K562 (cell line): ENCODE measurements at regions of chr7 and their contacts with region 1.

Region 1: DNA sequence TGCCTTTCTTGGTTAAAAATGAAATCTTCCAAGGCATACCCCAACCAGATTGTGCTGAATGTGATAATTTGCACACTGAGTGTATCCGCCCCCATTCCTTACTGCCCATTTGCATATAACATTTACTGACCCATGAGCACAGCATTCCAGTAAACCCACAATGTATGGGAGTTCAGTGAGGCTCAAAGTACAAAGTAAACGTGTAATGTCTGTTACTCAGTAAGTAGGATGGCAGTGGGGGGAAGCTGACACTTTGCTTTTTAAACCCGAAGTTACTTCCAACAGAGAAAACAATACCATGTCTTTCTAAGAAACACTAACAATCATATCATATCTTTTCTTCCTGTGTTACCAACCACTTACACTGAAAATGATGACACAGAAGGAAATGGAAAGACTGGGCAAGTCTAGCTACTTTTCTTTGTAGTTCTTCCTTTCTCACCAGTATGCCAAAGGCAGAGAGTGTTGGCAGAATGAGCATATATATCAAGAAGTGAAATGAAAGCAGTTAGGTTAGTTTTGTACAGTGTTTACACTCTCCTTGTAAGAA is 27.1 kb upstream of the SOSTDC1 start:
- DNase-seq: peak in 2 of 4 experiments; percentile 70 to 72
- ATAC-seq: peak; percentile 93
- H3K4me3 ChIP-seq: no peak overlapping the region
- H3K27ac ChIP-seq: peak overlapping the region; percentile 71
- H3K4me1 ChIP-seq: peaks cover 0 to 18% of the 10 kb centered on the region in 2 experiments; a peak in 3 of 5 replicates
- H3K27me3 ChIP-seq: no peaks in the 10 kb centered on the region
- CTCF ChIP-seq: no peak
- EP300 ChIP-seq: peak; percentile 92
- POLR2A ChIP-seq: no peak
- RAD21 ChIP-seq: peak in 1 of 2 experiments; percentile 39; a peak in 1 of 4 replicates

Region 2: GRCh38 chr7:16260236-16260728 is 232.3 kb before region 1 on chr7:
- CTCF ChIA-PET with region 1: no interaction called
- POLR2A ChIA-PET with region 1: no interaction called
- in situ Hi-C with region 1: no loop called
- intact Hi-C with region 1: loop called (anchors 1 kb)
- DNase-seq: peak; percentile 25 to 75 (median 32)
- ATAC-seq: peak; percentile 60
- H3K4me3 ChIP-seq: no peak overlapping the region
- H3K27ac ChIP-seq: peak overlapping the region; percentile 93
- H3K4me1 ChIP-seq: peaks cover 0 to 22% of the 10 kb centered on the region in 2 experiments; a peak in 3 of 5 replicates
- H3K27me3 ChIP-seq: no peaks in the 10 kb centered on the region
- CTCF ChIP-seq: no peak
- EP300 ChIP-seq: peak; percentile 57
- POLR2A ChIP-seq: no peak
- RAD21 ChIP-seq: no peak

Region 3: GRCh38 chr7:16268821-16269768 is 223.5 kb before region 1 on chr7:
- CTCF ChIA-PET with region 1: no interaction called
- POLR2A ChIA-PET with region 1: no interaction called
- in situ Hi-C with region 1: no loop called
- intact Hi-C with region 1: loop called (anchors 1 kb)
- DNase-seq: peak; percentile 88 to 98 (median 90)
- ATAC-seq: peak; percentile 66
- H3K4me3 ChIP-seq: no peak overlapping the region; the same call in 1 of the 2 replicates
- H3K27ac ChIP-seq: peak overlapping the region; percentile 94
- H3K4me1 ChIP-seq: peaks cover 10 to 30% of the 10 kb centered on the region in 2 experiments; a peak in 4 of 5 replicates
- H3K27me3 ChIP-seq: no peaks in the 10 kb centered on the region
- CTCF ChIP-seq: no peak
- EP300 ChIP-seq: peak; percentile 100
- POLR2A ChIP-seq: peak; percentile 76; the same call in 1 of the 2 replicates
- RAD21 ChIP-seq: peak in 1 of 2 experiments; percentile 42

Region 4: DNA sequence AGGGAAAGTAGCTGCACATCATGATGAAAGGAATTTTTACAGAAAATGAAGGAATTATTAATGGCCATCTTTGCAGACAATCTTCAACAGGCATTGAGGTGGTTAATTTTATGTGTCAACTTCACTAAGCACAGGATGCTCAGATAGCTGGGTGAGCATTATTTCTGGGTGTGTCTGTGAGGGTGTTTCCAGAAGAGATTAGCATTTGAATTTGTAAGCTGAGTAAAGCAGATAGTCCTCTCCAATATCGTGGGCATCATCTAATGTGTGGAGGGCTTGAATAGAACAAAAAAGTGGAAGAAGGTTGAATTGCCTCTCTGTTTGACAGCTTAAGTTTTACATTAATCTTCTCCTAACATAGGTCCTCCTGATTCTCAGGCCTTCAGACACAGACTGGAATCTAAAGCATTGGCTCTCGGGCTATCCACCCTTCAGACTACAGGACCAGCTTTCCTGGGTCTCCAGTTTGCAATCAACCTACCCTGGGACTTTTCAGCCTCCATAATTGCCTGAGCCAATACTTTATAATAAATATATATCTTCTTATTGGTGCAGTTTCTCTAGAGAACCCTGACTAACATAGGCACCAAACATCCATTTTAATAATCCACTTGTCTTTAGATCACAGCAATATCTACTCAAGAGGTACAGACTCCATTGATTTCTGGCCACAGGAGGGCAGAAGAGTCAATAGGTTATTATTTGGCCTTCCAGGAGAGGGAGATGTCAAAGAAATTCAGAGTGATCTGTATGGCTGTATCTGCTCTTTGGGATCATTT is 60.8 kb before region 1 on chr7:
- CTCF ChIA-PET with region 1: no interaction called
- POLR2A ChIA-PET with region 1: no interaction called
- in situ Hi-C with region 1: no loop called
- intact Hi-C with region 1: loop called (anchors 2 kb)
- DNase-seq: peak; percentile 36 to 77 (median 50)
- ATAC-seq: peak; percentile 92
- H3K4me3 ChIP-seq: no peak overlapping the region
- H3K27ac ChIP-seq: no peak overlapping the region
- H3K4me1 ChIP-seq: peaks cover 0 to 37% of the 10 kb centered on the region in 2 experiments; a peak in 4 of 5 replicates
- H3K27me3 ChIP-seq: no peaks in the 10 kb centered on the region
- CTCF ChIP-seq: peak; percentile 71 to 96 (median 89)
- EP300 ChIP-seq: no peak; the same call in 1 of the 2 replicates
- POLR2A ChIP-seq: no peak
- RAD21 ChIP-seq: peak; percentile 84 to 92

Region 5: DNA sequence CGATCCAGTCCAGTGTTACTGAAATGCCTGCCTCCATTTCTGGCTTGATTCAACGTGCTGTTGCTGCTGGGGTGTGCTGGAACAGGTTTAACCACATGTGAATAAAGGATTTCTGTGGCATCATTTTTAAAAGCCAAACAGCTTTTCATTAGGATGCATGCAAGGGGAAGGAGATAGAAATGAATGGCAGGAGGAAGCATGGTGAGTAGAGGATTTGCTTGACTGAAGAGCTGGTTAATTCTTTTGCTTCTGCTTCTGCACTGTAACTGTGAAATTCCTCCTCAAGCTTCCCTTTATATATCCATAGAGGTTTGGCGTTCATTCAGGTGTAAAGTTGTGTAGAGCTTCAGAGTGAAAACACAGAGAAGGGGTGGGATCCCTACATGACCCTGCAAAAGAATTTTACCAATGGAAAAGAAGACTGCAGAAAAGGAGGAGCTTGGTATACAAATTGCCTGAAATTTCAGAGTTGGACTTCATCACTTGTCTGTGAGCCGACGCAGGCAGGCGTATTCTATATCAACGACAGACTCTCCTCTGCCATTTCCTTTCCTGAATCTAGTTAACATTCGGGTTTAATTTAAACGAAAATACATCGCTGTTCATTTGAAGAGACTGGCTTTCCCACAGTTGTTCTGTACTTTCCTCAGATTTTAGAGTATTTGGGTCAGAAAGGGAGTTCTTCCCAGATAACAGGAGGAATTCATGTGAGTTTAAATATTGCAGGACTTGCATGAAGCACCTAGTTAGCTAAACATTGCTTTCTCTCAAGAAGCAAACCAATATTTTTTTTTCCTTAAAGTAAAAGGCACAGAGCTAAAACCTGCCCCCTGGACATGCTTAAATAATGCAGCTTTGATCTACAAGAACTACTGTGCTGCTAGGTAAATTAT is 26.9 kb before region 1 on chr7 and contains the start of gene SOSTDC1:
- CTCF ChIA-PET with region 1: no interaction called
- POLR2A ChIA-PET with region 1: interaction called, 6 read pairs
- in situ Hi-C with region 1: no loop called
- intact Hi-C with region 1: loop called (anchors 1 kb)
- DNase-seq: peak; percentile 16 to 78 (median 43)
- ATAC-seq: peak; percentile 91
- H3K4me3 ChIP-seq: peak within 1 kb of the TSS; percentile 45
- H3K27ac ChIP-seq: peak within 1 kb of the TSS; percentile 64
- H3K4me1 ChIP-seq: no peaks in the 10 kb centered on the region; a peak in 1 of 5 replicates
- H3K27me3 ChIP-seq: no peaks in the 10 kb centered on the region
- CTCF ChIP-seq: no peak
- EP300 ChIP-seq: no peak
- POLR2A ChIP-seq: peak; percentile 78
- RAD21 ChIP-seq: no peak; a peak in 1 of 4 replicates
- polyA plus RNA-seq, gene SOSTDC1: 47.5 to 48.6 TPM

Region 6: DNA sequence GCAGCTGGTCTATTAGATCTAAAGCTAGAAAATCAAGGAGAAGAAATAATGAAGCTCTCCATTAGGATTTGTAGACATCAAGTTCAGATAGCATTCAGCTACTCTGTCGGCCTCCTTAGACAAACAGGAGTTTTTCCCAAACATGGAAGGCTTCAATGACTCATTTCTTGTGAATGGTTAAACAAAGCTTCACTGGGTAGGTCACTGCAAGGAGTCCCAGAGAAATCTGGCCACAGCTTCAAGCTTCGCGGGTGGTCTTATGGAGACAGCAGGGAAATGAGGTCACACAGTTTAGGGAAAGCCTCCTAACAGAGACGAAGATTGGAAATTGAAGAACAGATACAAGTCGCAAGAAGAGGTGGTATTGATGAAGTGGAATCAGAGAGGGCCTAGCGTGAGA is 11.4 kb after region 1 on chr7:
- CTCF ChIA-PET with region 1: interaction called, 8 read pairs
- POLR2A ChIA-PET with region 1: interaction called, 12 read pairs
- in situ Hi-C with region 1: no loop called
- intact Hi-C with region 1: no loop called
- DNase-seq: no peak
- ATAC-seq: no peak
- H3K4me3 ChIP-seq: no peak overlapping the region
- H3K27ac ChIP-seq: no peak overlapping the region
- H3K4me1 ChIP-seq: peaks cover 3 to 10% of the 10 kb centered on the region in 2 experiments; a peak in 2 of 5 replicates
- H3K27me3 ChIP-seq: no peaks in the 10 kb centered on the region
- CTCF ChIP-seq: no peak
- EP300 ChIP-seq: no peak
- POLR2A ChIP-seq: no peak
- RAD21 ChIP-seq: no peak

Region 7: GRCh38 chr7:16564909-16565426 is 72.4 kb after region 1 on chr7:
- CTCF ChIA-PET with region 1: no interaction called
- POLR2A ChIA-PET with region 1: no interaction called
- in situ Hi-C with region 1: no loop called
- intact Hi-C with region 1: loop called (anchors 5 kb)
- DNase-seq: peak; percentile 47 to 71 (median 58)
- ATAC-seq: peak; percentile 84
- H3K4me3 ChIP-seq: no peak overlapping the region
- H3K27ac ChIP-seq: no peak overlapping the region
- H3K4me1 ChIP-seq: no peaks in the 10 kb centered on the region; a peak in 2 of 5 replicates
- H3K27me3 ChIP-seq: no peaks in the 10 kb centered on the region
- CTCF ChIP-seq: peak; percentile 62 to 86 (median 68); a peak in 5 of 6 replicates
- EP300 ChIP-seq: no peak
- POLR2A ChIP-seq: no peak
- RAD21 ChIP-seq: peak; percentile 94 to 98

Region 8: DNA sequence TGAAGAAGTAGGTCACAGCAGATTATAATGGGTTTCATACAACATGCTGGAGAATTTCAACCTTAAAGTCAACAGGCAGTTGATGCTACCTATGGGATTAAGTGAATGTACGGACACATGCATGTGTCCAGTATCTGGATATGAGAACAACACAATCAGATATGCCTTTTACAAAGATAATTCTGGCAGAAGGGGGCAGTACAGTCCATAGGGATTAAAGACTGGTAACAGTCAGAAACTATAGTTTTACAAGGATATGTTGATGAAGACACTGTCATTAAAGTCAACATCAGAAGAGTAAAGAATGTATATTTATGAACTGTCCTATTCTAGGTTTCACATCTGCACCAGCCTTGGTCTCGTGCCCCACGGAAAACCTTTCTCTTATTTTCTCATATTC is 111.5 kb after region 1 on chr7:
- CTCF ChIA-PET with region 1: no interaction called
- POLR2A ChIA-PET with region 1: no interaction called
- in situ Hi-C with region 1: no loop called
- intact Hi-C with region 1: no loop called
- DNase-seq: no peak
- ATAC-seq: peak; percentile 49; the same call in 1 of the 3 replicates
- H3K4me3 ChIP-seq: no peak overlapping the region
- H3K27ac ChIP-seq: no peak overlapping the region
- H3K4me1 ChIP-seq: no peaks in the 10 kb centered on the region
- H3K27me3 ChIP-seq: no peaks in the 10 kb centered on the region
- CTCF ChIP-seq: peak in 1 of 3 experiments; percentile 43; a peak in 2 of 6 replicates
- EP300 ChIP-seq: no peak
- POLR2A ChIP-seq: no peak
- RAD21 ChIP-seq: peak in 1 of 2 experiments; percentile 56; a peak in 2 of 4 replicates